Mammary epithelial cell (primary cell): ENCODE measurements at regions of chr5 and their contacts with region 1.

Region 1: GRCh38 chr5:83097689-83098231 is 20.4 kb downstream of the XRCC4 start:
- DNase-seq: no peak
- H3K4me3 ChIP-seq: no peak overlapping the region
- H3K27ac ChIP-seq: no peak overlapping the region
- H3K4me1 ChIP-seq: peaks cover 29% of the 10 kb centered on the region
- H3K27me3 ChIP-seq: no peaks in the 10 kb centered on the region
- CTCF ChIP-seq: no peak

Region 2: GRCh38 chr5:83085106-83085505 is 12.7 kb before region 1 on chr5:
- CTCF ChIA-PET with region 1: no interaction called
- dilution Hi-C with region 1: no loop called
- in situ Hi-C with region 1: no loop called
- intact Hi-C with region 1: loop called (anchors 2 kb)
- DNase-seq: no peak
- H3K4me3 ChIP-seq: no peak overlapping the region
- H3K27ac ChIP-seq: no peak overlapping the region
- H3K4me1 ChIP-seq: no peaks in the 10 kb centered on the region
- H3K27me3 ChIP-seq: no peaks in the 10 kb centered on the region
- CTCF ChIP-seq: no peak

Region 3: GRCh38 chr5:83294246-83294645 is 196.5 kb after region 1 on chr5:
- CTCF ChIA-PET with region 1: no interaction called
- dilution Hi-C with region 1: no loop called
- in situ Hi-C with region 1: no loop called
- intact Hi-C with region 1: no loop called
- DNase-seq: no peak
- H3K4me3 ChIP-seq: no peak overlapping the region
- H3K27ac ChIP-seq: no peak overlapping the region
- H3K4me1 ChIP-seq: no peaks in the 10 kb centered on the region
- H3K27me3 ChIP-seq: no peaks in the 10 kb centered on the region
- CTCF ChIP-seq: no peak

Region 4: GRCh38 chr5:83387041-83387440 is 289.3 kb after region 1 on chr5:
- CTCF ChIA-PET with region 1: no interaction called
- dilution Hi-C with region 1: no loop called
- in situ Hi-C with region 1: no loop called
- intact Hi-C with region 1: no loop called
- DNase-seq: no peak
- H3K4me3 ChIP-seq: no peak overlapping the region
- H3K27ac ChIP-seq: no peak overlapping the region
- H3K4me1 ChIP-seq: no peaks in the 10 kb centered on the region
- H3K27me3 ChIP-seq: no peaks in the 10 kb centered on the region
- CTCF ChIP-seq: no peak